PC-3 (cell line): ENCODE measurements at regions of chr7 and their contacts with region 1.

Region 1: GRCh38 chr7:141754939-141755338 is 9.0 kb upstream of the TAS2R3 start:
- DNase-seq: peak; percentile 47
- ATAC-seq: peak; percentile 49; the same call in 1 of the 2 replicates
- H3K4me3 ChIP-seq: no peak overlapping the region
- H3K27ac ChIP-seq: no peak overlapping the region
- H3K4me1 ChIP-seq: no peaks in the 10 kb centered on the region
- H3K27me3 ChIP-seq: no peaks in the 10 kb centered on the region
- CTCF ChIP-seq: peak; percentile 59

Region 2: GRCh38 chr7:141785706-141786552 is 31.0 kb after region 1 on chr7:
- CTCF ChIA-PET with region 1: no interaction called
- POLR2A ChIA-PET with region 1: no interaction called
- intact Hi-C with region 1: loop called (anchors 1 kb)
- DNase-seq: peak; percentile 69
- ATAC-seq: peak; percentile 94
- H3K4me3 ChIP-seq: no peak overlapping the region
- H3K27ac ChIP-seq: no peak overlapping the region
- H3K4me1 ChIP-seq: no peaks in the 10 kb centered on the region
- H3K27me3 ChIP-seq: no peaks in the 10 kb centered on the region
- CTCF ChIP-seq: peak; percentile 91

Region 3: DNA sequence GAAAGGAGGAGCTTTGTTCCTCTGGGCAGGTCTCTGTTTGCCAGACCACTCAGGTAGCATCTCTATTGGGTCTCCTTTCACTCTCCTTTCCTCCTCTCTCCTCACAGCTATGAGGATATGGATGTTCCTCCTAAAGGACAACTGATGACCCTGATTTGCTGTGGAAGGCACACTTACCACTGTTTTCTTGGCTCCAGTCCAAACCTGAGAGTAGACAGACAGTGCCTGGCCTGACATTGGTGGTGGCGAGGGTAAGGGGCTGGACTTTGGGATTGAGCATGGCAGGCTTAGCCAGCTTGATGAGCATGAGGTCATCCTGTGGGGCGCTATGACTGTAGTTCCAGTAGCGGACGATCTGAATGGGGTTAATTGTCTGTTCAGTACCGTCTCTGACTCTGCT is 82.7 kb after region 1 on chr7:
- CTCF ChIA-PET with region 1: no interaction called
- POLR2A ChIA-PET with region 1: no interaction called
- intact Hi-C with region 1: no loop called
- DNase-seq: no peak
- ATAC-seq: no peak
- H3K4me3 ChIP-seq: no peak overlapping the region
- H3K27ac ChIP-seq: no peak overlapping the region
- H3K4me1 ChIP-seq: no peaks in the 10 kb centered on the region
- H3K27me3 ChIP-seq: peaks cover 30% of the 10 kb centered on the region
- CTCF ChIP-seq: no peak